ENCODE measurements at regions of chr16 and their contacts with region 1.

Region 1: DNA sequence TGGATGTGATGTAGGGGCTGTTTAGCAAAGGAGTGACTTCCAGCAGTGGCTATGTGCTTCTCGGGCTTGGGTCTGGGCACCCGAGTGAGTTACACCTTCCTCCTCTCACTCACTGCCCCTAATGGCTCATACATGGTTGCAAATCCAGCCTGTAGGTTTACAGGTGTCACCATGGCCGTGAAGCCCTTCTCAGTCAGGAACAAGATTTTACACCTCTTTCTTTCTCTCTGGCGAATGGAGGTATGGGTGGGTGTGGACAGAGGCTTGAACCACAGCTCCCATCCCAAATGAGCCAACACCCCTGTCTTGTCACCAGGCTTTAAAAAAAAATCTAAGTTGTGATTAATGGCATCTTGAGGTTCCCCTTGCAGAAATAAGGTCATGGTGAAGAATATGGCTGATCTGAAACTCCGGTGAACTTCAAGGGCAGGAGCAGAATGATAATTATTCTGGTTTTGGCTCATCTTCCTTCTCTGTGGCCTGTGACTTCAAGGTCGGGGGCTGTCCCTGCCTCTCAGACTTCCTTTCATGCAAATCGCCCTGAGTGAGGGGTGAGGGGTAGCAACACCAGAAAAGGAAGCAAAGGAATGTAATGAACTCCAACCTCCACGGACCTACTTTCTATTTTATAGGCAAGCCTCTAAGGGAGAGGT is 331.2 kb downstream of the MAF start:
- DNase-seq: peak; percentile 58
- H3K4me3 Mint-ChIP-seq: peak overlapping the region; percentile 60
- H3K27ac Mint-ChIP-seq: peak overlapping the region; percentile 89
- H3K4me1 Mint-ChIP-seq: peaks cover 88% of the 10 kb centered on the region
- H3K27me3 Mint-ChIP-seq: peaks cover 12% of the 10 kb centered on the region

Region 2: DNA sequence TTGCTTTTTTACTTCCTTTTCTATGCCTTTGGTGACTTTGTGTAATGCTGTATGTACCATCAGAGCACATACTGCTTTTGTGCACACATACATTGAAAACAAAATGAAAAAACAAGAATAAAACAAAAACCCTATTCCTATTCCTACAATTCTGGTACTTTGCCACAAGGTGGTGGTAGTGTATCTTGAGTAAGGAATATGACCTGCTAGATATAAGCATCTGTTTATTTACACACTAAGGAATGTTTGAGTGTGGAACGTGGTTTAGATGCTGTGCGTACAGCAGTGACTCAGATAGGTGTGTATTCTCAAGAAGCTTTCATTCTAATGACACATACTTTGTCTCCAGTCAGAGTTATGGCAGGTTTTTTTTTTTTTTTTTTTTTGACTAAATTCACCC is 563.6 kb before region 1 on chr16:
- intact Hi-C with region 1: loop called (anchors 5 kb)
- DNase-seq: peak; percentile 2
- H3K4me3 Mint-ChIP-seq: no peak overlapping the region
- H3K27ac Mint-ChIP-seq: no peak overlapping the region
- H3K4me1 Mint-ChIP-seq: peaks cover 14% of the 10 kb centered on the region
- H3K27me3 Mint-ChIP-seq: peaks cover 2% of the 10 kb centered on the region

Region 3: GRCh38 chr16:78900044-78900811 is 369.1 kb before region 1 on chr16:
- intact Hi-C with region 1: loop called (anchors 1 kb)
- DNase-seq: no peak
- H3K4me3 Mint-ChIP-seq: no peak overlapping the region
- H3K27ac Mint-ChIP-seq: peak overlapping the region; percentile 51
- H3K4me1 Mint-ChIP-seq: peaks cover 42% of the 10 kb centered on the region
- H3K27me3 Mint-ChIP-seq: no peaks in the 10 kb centered on the region

Region 4: DNA sequence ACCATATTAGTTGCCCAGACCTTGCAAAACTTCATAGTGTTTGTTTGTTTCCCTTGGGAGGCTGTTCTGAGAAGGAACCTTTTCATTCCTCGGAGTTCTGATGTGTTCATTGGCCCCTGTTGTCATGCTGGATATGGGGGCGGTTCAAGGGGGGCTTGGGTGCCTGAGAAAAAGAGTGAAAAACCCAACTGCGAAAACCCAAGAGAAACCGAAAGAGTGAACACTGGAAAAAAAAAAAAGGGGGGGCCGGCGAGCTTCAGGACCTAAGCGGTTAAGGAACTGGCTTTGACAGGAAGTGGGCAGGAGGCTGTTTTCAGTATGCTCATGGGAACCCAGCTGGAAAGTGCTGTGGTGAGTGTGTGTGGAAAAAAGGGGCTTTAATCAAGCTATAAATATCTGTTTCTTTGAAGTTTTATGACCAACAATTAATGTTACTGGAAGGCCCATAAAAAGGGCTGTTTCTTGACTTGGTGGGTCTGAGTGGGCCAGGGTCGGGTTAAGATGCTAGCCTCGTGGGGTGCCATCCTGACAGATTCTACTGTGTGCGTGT is 179.5 kb before region 1 on chr16:
- intact Hi-C with region 1: loop called (anchors 2 kb)
- DNase-seq: peak; percentile 66
- H3K4me3 Mint-ChIP-seq: peak overlapping the region; percentile 62
- H3K27ac Mint-ChIP-seq: peak overlapping the region; percentile 95
- H3K4me1 Mint-ChIP-seq: peaks cover 53% of the 10 kb centered on the region
- H3K27me3 Mint-ChIP-seq: no peaks in the 10 kb centered on the region

Region 5: DNA sequence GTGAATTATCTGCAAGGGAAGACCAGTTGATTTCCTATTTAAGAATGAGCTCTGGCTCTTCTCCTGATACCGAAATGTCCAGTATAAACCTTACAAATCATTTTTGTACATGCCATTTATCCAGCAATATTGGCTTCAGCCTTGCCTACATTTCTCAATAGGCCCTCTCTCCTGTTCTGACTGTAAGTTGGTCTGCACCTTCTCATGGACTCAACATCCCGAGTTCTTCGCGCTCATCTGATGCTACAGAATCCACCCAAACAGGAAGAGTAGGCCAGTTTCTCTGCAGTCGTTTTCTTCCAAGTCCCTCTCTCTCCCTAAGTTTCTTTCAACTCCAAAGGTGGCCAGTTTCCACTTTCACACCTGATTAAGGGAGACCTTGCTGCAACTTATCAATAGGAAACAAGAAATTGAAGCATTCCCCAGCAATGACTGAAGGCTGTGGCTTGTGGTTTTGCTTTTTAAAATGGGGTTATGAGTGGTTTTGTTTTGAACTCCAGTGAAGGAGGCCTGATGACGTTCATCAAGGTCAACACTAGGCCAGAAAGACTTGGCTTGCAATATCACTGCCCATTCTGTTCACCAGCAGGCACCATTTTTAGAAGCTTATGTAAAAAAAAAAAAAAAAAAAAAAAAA is 51.8 kb before region 1 on chr16:
- intact Hi-C with region 1: loop called (anchors 1 kb)
- DNase-seq: peak; percentile 19
- H3K4me3 Mint-ChIP-seq: no peak overlapping the region
- H3K27ac Mint-ChIP-seq: no peak overlapping the region
- H3K4me1 Mint-ChIP-seq: peaks cover 19% of the 10 kb centered on the region
- H3K27me3 Mint-ChIP-seq: no peaks in the 10 kb centered on the region

Region 6: GRCh38 chr16:79316004-79316458 is 46.7 kb after region 1 on chr16:
- intact Hi-C with region 1: loop called (anchors 1 kb)
- DNase-seq: peak; percentile 54
- H3K4me3 Mint-ChIP-seq: peak overlapping the region; percentile 64
- H3K27ac Mint-ChIP-seq: peak overlapping the region; percentile 90
- H3K4me1 Mint-ChIP-seq: peaks cover 29% of the 10 kb centered on the region
- H3K27me3 Mint-ChIP-seq: peaks cover 10% of the 10 kb centered on the region

Region 7: GRCh38 chr16:79628501-79628975 is 359.2 kb after region 1 on chr16:
- intact Hi-C with region 1: loop called (anchors 1 kb)
- DNase-seq: peak; percentile 77
- H3K4me3 Mint-ChIP-seq: peak overlapping the region; percentile 68
- H3K27ac Mint-ChIP-seq: peak overlapping the region; percentile 93
- H3K4me1 Mint-ChIP-seq: peaks cover 77% of the 10 kb centered on the region
- H3K27me3 Mint-ChIP-seq: peaks cover 8% of the 10 kb centered on the region

Region 8: DNA sequence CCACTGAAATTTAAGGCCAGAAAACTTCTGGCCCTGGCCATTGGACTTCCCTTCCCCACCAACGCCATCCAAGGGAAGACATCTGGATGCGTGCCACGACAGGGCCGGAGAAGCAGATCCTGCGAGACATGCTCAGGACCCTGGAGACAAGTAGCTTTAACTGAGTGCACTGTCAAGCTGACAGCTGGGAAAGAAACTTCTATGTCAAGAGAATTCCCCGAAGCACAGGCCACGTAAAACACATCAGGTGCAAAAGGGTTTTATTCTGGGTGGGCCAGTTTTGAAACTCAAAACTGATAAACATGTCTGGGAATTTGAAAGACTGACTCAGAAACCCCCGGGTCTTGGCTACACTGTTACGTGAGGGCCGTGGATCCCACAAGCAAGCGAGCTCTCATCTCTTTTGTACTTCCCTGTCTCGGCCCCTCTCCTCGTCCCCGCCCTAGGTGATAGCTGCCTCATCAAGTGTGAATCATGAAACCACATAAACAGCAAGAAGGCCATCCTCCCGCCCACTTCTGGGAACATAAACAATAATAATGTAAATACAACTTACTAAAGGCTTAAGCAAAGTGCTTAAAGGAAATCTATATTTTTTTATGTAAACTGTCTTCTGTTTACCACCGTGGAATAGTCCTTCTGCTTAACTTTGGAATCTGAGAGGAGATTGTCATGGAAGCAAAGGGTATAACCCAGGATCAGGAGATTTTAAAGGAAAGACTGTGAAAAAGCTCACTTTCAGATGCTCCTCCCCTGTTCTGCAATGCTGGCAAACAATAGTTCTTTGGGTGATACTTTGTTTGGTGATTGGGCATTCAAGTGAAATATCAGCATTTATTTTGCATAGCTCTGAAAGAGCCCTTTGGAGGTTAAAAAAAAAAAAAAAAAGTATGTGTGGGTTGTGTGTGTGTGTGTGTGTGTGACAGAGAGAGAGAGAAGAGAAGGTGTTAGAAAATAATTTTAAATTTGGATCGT is 737.2 kb after region 1 on chr16:
- intact Hi-C with region 1: no loop called
- DNase-seq: no peak
- H3K4me3 Mint-ChIP-seq: no peak overlapping the region
- H3K27ac Mint-ChIP-seq: no peak overlapping the region
- H3K4me1 Mint-ChIP-seq: no peaks in the 10 kb centered on the region
- H3K27me3 Mint-ChIP-seq: peaks cover 3% of the 10 kb centered on the region